ENCODE measurements at regions of chr2 and their contacts with region 1.

Region 1: DNA sequence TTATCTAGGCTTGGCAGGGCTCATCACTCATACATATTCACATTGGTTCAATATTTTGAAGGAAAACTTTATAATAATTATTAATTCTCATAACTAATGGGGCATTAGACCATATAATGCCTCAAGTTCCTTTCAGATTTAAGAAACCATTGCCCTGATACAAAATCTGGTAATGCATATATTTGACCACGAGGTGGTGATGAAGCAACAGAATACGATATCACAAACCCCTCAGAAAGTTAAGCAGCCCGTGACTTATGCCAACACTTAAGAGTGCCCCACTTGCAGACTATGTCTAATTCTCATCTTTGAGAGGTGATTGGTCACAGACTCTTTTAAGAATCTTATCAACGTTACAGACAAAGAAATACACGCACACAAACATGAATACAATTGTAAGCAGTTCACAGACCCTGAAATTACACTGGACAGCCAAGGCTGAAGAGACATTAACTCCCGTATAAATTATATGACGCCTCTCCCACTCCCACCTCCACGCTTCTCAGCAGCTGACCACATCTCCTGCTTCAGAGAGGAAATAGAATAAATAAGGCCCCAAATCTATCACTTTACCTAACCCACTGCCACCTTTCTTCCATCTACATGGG is 20.7 kb upstream of the DNAH6 start:
- DNase-seq: no peak
- ATAC-seq: peak in 1 of 2 donors; percentile 56
- H3K4me3 ChIP-seq: no peak overlapping the region
- H3K27ac ChIP-seq: no peak overlapping the region
- H3K4me1 ChIP-seq: no peaks in the 10 kb centered on the region
- H3K27me3 ChIP-seq: no peaks in the 10 kb centered on the region
- CTCF ChIP-seq: peak; percentile 40 to 61 (median 55)
- POLR2A ChIP-seq: no peak

Region 2: GRCh38 chr2:84870306-84870705 is 374.7 kb after region 1 on chr2:
- in situ Hi-C with region 1: loop called in 1 of 4 experiments (anchors 5 kb)
- intact Hi-C with region 1: no loop called
- DNase-seq: no peak
- ATAC-seq: no peak
- H3K4me3 ChIP-seq: no peak overlapping the region
- H3K27ac ChIP-seq: no peak overlapping the region
- H3K4me1 ChIP-seq: no peaks in the 10 kb centered on the region
- H3K27me3 ChIP-seq: no peaks in the 10 kb centered on the region
- CTCF ChIP-seq: no peak
- POLR2A ChIP-seq: no peak

Region 3: DNA sequence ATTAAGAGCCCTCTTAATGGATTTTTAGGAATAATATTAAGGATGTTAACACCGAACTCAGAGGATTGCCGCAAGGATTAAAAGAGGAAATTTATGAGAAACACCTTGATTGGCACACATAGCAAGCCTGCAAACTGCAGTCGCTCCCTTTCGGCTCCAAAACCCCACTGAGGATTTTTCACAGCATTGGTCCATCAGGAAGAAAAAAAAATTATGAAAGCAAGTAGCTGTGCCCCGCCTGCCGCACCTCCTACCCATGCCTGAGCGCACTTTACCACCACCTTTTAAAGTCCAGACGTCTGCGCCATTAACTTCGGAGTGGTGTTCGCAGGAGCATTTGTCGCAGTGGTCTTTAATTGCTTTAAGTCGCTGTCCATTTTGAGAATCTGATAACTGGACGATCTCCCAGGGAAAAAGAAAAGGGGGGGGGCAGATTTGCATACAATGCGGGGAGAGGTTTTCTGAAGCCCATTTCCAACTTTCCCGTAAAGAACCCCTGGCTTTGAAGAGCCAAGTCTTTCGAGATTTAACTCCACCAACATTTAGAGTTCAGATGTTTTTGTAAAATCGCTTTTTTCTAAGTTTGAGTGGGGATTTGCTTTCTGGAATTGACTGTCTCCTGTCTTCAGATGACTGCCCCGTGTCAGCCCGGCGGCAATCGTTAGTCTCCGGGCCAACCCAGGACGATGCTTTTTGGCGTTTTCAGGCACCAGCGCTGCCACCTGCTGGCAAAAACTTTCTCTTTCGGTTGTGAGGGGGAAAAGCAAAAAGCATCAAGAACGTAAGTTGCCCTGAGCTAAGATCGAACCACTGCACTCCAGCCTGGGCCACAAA is 386.2 kb after region 1 on chr2:
- in situ Hi-C with region 1: loop called in 3 of 4 experiments (anchors 10 kb)
- intact Hi-C with region 1: loop called (anchors 1 kb)
- DNase-seq: peak; percentile 49 to 55
- ATAC-seq: peak; percentile 70 to 76
- H3K4me3 ChIP-seq: peak overlapping the region; percentile 44 to 57 (median 50)
- H3K27ac ChIP-seq: no peak overlapping the region
- H3K4me1 ChIP-seq: peaks cover 20 to 21% of the 10 kb centered on the region in 2 donors
- H3K27me3 ChIP-seq: peaks cover 21 to 27% (median 26%) of the 10 kb centered on the region in 3 donors
- CTCF ChIP-seq: peak; percentile 31 to 75 (median 60)
- POLR2A ChIP-seq: no peak

Measured in gastrocnemius medialis (tissue), 4 donors.